GM12878 (cell line): ENCODE measurements at regions of chr1 and their contacts with region 1.

Region 1: DNA sequence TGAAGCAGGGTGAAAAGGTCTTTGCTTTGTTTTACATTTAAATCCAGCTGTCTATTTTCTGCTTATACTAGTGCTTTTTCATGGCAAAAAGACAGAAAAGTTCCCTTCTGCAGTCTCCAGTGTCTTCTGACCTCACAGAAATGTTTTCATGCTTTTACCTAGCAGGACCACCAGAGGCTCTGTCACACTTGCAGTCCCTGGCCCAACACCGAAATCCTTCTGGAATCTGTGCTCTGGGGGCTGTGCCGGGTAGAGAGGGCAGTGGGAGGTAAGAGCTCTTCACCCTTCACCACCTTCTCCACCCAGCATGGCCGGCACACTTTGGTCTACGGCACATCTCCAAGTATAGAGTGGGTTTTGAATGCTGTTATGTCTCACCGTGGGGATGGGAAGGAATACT is 20.8 kb downstream of the GNAT2 start:
- DNase-seq: no peak
- ATAC-seq: peak; percentile 48; the same call in 2 of the 3 replicates
- H3K4me3 ChIP-seq: no peak overlapping the region
- H3K27ac ChIP-seq: no peak overlapping the region
- H3K4me1 ChIP-seq: no peaks in the 10 kb centered on the region
- H3K27me3 ChIP-seq: no peaks in the 10 kb centered on the region
- CTCF ChIP-seq: peak in 2 of 3 experiments; percentile 9 to 13; a peak in 1 of 6 replicates
- EP300 ChIP-seq: no peak
- POLR2A ChIP-seq: no peak
- RAD21 ChIP-seq: 0 out of 2 replicates have a peak, but pooled peaks have one; percentile 13

Region 2: GRCh38 chr1:109620841-109621286 is 22.2 kb after region 1 on chr1:
- CTCF ChIA-PET with region 1: interaction called, 5 read pairs
- POLR2A ChIA-PET with region 1: no interaction called
- RAD21 ChIA-PET with region 1: interaction called, 4 read pairs
- SMC1A ChIA-PET with region 1: interaction called, 11 read pairs
- in situ Hi-C with region 1: no loop called
- intact Hi-C with region 1: no loop called
- DNase-seq: peak; percentile 66
- ATAC-seq: peak; percentile 81
- H3K4me3 ChIP-seq: peak overlapping the region; percentile 85
- H3K27ac ChIP-seq: peak overlapping the region; percentile 72
- H3K4me1 ChIP-seq: peaks cover 41% of the 10 kb centered on the region
- H3K27me3 ChIP-seq: no peaks in the 10 kb centered on the region
- CTCF ChIP-seq: no peak
- EP300 ChIP-seq: no peak
- POLR2A ChIP-seq: peak; percentile 52; the same call in 1 of the 2 replicates
- RAD21 ChIP-seq: no peak

Region 3: DNA sequence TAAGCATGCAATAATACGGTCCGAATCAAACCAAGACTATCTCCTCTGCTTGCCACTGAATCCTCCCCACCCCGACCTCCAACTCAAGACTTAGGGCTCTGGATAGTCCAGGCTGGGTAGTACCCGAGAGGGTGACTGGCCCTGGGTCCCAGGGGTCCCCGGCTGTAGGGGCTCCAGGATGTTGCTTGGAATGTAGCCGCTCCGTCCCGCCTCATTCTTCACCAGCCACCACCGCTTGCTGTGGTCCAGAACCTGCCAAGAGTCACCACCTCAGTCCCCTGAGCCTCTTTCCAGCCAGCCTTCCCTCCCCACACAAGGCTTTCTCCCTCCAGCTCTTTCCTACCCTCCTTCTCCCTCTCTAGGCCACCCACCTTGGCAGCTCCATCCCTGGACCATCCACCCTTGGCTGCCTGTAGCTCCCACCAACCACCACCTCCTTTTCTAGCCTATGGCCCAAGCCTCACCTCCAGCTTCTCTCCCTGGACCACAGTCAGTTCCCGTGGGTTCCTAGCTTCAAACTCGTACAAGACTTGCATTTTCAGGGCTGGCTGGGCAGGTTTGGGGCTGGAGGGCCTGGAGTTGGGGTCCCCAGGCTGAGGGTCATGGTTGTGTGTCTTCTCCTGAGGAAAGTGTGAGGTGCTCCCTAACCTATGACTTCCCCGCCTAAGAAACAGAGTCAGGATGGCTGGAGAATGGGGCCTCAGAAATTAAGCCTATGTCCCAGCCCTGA is 153.0 kb after region 1 on chr1:
- CTCF ChIA-PET with region 1: no interaction called
- POLR2A ChIA-PET with region 1: no interaction called
- RAD21 ChIA-PET with region 1: no interaction called
- SMC1A ChIA-PET with region 1: no interaction called
- in situ Hi-C with region 1: no loop called
- intact Hi-C with region 1: no loop called
- DNase-seq: no peak
- ATAC-seq: no peak
- H3K4me3 ChIP-seq: no peak overlapping the region
- H3K27ac ChIP-seq: no peak overlapping the region
- H3K4me1 ChIP-seq: no peaks in the 10 kb centered on the region
- H3K27me3 ChIP-seq: peaks cover 8 to 13% of the 10 kb centered on the region in 2 experiments
- CTCF ChIP-seq: no peak
- EP300 ChIP-seq: no peak
- POLR2A ChIP-seq: no peak
- RAD21 ChIP-seq: no peak